SK-N-SH (cell line): ENCODE measurements at regions of chrX and their contacts with region 1.

Region 1: GRCh38 chrX:51461053-51462044 is 35.0 kb downstream of the NUDT11 start:
- DNase-seq: peak; percentile 25
- H3K4me3 ChIP-seq: no peak overlapping the region
- H3K27ac ChIP-seq: no peak overlapping the region
- H3K4me1 ChIP-seq: no peaks in the 10 kb centered on the region
- H3K27me3 ChIP-seq: peaks cover 5% of the 10 kb centered on the region; the same call in 1 of the 2 replicates
- CTCF ChIP-seq: peak; percentile 90
- EP300 ChIP-seq: no peak
- RAD21 ChIP-seq: peak; percentile 66

Region 2: DNA sequence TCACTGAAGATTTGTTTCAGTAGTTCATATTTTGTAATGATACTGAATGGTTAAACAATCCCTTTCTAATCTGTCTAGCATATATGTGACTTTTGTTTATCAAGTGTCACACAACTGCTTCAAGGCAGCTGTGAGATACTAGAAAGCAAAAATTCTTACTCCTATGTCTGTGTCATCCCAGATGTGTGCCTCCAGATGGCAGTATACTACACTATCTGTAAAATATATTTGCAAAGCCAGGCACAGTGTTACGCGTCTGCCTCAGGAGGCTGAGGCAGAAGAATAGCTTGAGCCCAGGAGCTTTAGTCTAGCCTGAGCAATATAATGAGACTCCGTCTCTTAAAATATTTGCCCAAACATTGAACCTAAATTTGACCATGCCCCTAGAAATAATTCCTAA is 124.8 kb before region 1 on chrX:
- CTCF ChIA-PET with region 1: interaction called, 77 read pairs
- POLR2A ChIA-PET with region 1: no interaction called
- DNase-seq: peak; percentile 63
- H3K4me3 ChIP-seq: no peak overlapping the region
- H3K27ac ChIP-seq: no peak overlapping the region
- H3K4me1 ChIP-seq: no peaks in the 10 kb centered on the region; a peak in 1 of 4 replicates
- H3K27me3 ChIP-seq: peaks cover 14% of the 10 kb centered on the region
- CTCF ChIP-seq: peak; percentile 67
- EP300 ChIP-seq: no peak
- RAD21 ChIP-seq: peak; percentile 74

Region 3: DNA sequence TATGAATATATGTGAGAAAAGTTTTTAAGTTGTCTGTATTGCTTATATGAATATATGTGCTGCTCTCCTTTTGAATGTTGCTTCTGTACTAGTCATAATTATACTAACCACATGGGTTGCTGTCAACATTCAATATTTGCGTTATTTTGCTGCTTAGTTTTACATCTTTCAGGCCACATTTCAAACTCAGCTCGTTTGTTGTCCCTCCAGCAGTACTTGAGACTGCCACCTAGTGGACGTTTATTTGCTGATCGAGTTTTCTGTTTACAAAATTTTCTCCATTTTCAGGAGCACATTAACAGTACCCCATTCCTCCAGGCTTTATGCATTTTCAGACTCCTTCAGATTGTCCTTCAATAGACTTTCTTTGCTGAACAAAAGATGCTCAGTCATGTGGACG is 40.7 kb before region 1 on chrX:
- CTCF ChIA-PET with region 1: interaction called, 23 read pairs
- POLR2A ChIA-PET with region 1: no interaction called
- DNase-seq: peak; percentile 40
- H3K4me3 ChIP-seq: no peak overlapping the region
- H3K27ac ChIP-seq: no peak overlapping the region
- H3K4me1 ChIP-seq: peaks cover 0 to 3% of the 10 kb centered on the region in 2 experiments; a peak in 1 of 4 replicates
- H3K27me3 ChIP-seq: no peaks in the 10 kb centered on the region; the same call in 1 of the 2 replicates
- CTCF ChIP-seq: peak; percentile 87
- EP300 ChIP-seq: no peak
- RAD21 ChIP-seq: peak; percentile 64

Region 4: DNA sequence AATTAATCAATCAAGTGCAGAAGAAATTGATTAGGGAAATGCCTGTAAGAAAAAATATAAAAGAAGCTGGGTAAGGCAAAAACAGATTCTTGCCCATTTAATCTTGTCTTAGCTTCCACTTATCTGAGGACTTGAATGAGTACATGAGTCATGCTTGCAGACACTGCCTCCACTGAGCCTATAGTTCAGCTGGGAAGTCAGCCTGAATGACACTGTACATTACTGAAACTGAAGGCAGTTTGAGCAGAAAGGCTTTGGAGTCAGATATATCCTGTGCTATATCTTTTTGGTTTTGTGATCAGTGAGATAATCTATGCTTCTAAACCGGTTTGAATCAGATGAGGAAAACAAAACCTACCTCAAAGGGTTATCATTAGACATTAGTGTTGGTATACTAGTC is 26.2 kb before region 1 on chrX:
- CTCF ChIA-PET with region 1: interaction called, 23 read pairs
- POLR2A ChIA-PET with region 1: no interaction called
- DNase-seq: no peak
- H3K4me3 ChIP-seq: no peak overlapping the region
- H3K27ac ChIP-seq: no peak overlapping the region
- H3K4me1 ChIP-seq: no peaks in the 10 kb centered on the region
- H3K27me3 ChIP-seq: no peaks in the 10 kb centered on the region
- CTCF ChIP-seq: no peak
- EP300 ChIP-seq: no peak
- RAD21 ChIP-seq: no peak

Region 5: DNA sequence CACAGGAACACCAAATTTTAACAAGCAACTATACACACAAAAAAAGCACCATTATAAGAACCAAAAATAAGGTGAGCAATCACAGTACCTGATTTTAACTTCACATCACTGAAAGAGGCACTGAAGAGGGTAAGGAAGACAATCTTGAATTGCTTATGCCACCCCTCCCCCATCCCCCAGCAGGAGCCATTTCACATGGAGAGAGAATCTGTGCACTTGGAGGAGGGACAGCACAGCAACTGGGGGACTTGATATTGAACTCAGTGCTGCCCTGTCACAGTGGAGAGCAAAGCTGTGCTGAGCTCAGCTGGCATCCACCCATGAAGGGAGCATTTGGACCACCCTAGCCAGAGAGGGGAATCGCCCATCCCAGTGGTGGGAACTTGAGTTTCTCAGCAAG is 21.0 kb before region 1 on chrX:
- CTCF ChIA-PET with region 1: interaction called, 23 read pairs
- POLR2A ChIA-PET with region 1: no interaction called
- DNase-seq: no peak
- H3K4me3 ChIP-seq: no peak overlapping the region
- H3K27ac ChIP-seq: no peak overlapping the region
- H3K4me1 ChIP-seq: no peaks in the 10 kb centered on the region
- H3K27me3 ChIP-seq: no peaks in the 10 kb centered on the region
- CTCF ChIP-seq: no peak
- EP300 ChIP-seq: no peak
- RAD21 ChIP-seq: no peak

Region 6: GRCh38 chrX:51445936-51446335 is 15.4 kb before region 1 on chrX:
- CTCF ChIA-PET with region 1: interaction called, 17 read pairs
- POLR2A ChIA-PET with region 1: no interaction called
- DNase-seq: no peak
- H3K4me3 ChIP-seq: no peak overlapping the region
- H3K27ac ChIP-seq: no peak overlapping the region
- H3K4me1 ChIP-seq: no peaks in the 10 kb centered on the region
- H3K27me3 ChIP-seq: no peaks in the 10 kb centered on the region
- CTCF ChIP-seq: no peak
- EP300 ChIP-seq: no peak
- RAD21 ChIP-seq: no peak

Region 7: GRCh38 chrX:51476930-51477329 is 15.6 kb after region 1 on chrX:
- CTCF ChIA-PET with region 1: interaction called, 49 read pairs
- POLR2A ChIA-PET with region 1: no interaction called
- DNase-seq: no peak
- H3K4me3 ChIP-seq: no peak overlapping the region
- H3K27ac ChIP-seq: no peak overlapping the region
- H3K4me1 ChIP-seq: no peaks in the 10 kb centered on the region
- H3K27me3 ChIP-seq: peaks cover 6% of the 10 kb centered on the region; the same call in 1 of the 2 replicates
- CTCF ChIP-seq: no peak
- EP300 ChIP-seq: no peak
- RAD21 ChIP-seq: no peak

Region 8: GRCh38 chrX:51507551-51507950 is 46.2 kb after region 1 on chrX:
- CTCF ChIA-PET with region 1: no interaction called
- POLR2A ChIA-PET with region 1: no interaction called
- DNase-seq: no peak
- H3K4me3 ChIP-seq: no peak overlapping the region
- H3K27ac ChIP-seq: no peak overlapping the region
- H3K4me1 ChIP-seq: no peaks in the 10 kb centered on the region
- H3K27me3 ChIP-seq: no peaks in the 10 kb centered on the region; the same call in 1 of the 2 replicates
- CTCF ChIP-seq: no peak
- EP300 ChIP-seq: no peak
- RAD21 ChIP-seq: no peak